ENCODE measurements at regions of chr1 and their contacts with region 1.

Region 1: DNA sequence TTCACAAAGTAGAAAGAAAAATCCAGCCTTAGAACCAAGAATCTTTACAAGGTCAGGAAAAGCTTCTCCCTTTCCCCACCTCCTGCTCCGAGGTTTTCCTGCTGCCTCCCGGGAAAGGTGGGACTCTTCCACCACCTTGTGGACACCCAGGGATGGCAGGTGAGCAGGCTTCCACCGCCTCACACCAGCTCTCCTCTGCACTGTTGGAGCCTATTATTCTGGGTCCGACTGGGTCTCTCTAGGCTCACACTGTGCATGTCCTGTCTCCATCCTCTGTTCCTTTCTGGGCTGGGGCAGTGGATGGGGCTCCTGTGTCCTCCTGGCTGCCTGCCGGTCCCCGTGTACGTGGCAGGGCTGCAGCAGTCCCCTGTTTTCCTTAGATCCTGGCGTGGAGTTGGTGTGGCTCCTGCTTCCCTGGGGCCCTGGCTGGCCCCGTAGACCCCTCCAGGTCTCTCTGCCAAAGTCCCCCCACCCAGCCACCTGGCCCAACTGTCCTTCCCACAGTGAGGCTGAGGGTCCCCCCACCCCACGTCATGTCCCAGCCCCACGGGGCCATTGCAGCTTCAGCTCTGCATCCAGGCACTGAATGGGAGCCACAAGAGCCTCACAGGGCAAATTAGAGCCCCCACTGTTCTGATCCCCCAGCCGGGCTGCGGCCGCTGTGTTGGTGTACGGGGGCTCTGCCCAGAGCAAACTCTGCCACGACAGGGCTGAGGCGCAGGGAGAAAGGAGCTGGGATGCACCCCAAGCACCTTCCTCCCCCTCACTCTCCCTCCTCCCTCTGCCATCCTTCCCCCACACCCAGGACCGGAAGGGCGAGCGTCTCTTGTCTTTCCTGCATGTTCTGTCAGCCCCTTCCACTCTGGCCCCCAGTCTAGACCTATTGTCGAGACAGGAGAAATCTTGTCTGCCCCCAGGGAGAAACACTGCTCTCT is 3.3 kb upstream of the SLC45A1 start:
- DNase-seq: peak; percentile 76
- H3K4me3 ChIP-seq: no peak overlapping the region
- H3K27ac ChIP-seq: no peak overlapping the region
- H3K4me1 ChIP-seq: peaks cover 7% of the 10 kb centered on the region
- H3K27me3 ChIP-seq: no peaks in the 10 kb centered on the region
- CTCF ChIP-seq: peak; percentile 86 to 88
- POLR2A ChIP-seq: no peak

Region 2: GRCh38 chr1:7983086-7983778 is 331.4 kb before region 1 on chr1:
- CTCF ChIA-PET with region 1: interaction called, 147 read pairs
- POLR2A ChIA-PET with region 1: no interaction called
- dilution Hi-C with region 1: no loop called
- intact Hi-C with region 1: loop called (anchors 1 kb)
- DNase-seq: no peak
- H3K4me3 ChIP-seq: no peak overlapping the region
- H3K27ac ChIP-seq: no peak overlapping the region
- H3K4me1 ChIP-seq: no peaks in the 10 kb centered on the region
- H3K27me3 ChIP-seq: no peaks in the 10 kb centered on the region
- CTCF ChIP-seq: no peak
- POLR2A ChIP-seq: no peak

Region 3: GRCh38 chr1:8015036-8015808 is 299.4 kb before region 1 on chr1:
- CTCF ChIA-PET with region 1: interaction called, 396 read pairs
- POLR2A ChIA-PET with region 1: interaction called, 8 read pairs
- dilution Hi-C with region 1: loop called (anchors 10 kb)
- intact Hi-C with region 1: loop called (anchors 1 kb)
- DNase-seq: peak; percentile 93
- H3K4me3 ChIP-seq: no peak overlapping the region
- H3K27ac ChIP-seq: peak overlapping the region; percentile 54
- H3K4me1 ChIP-seq: peaks cover 52% of the 10 kb centered on the region
- H3K27me3 ChIP-seq: no peaks in the 10 kb centered on the region
- CTCF ChIP-seq: peak; percentile 58 to 62
- POLR2A ChIP-seq: no peak

Region 4: DNA sequence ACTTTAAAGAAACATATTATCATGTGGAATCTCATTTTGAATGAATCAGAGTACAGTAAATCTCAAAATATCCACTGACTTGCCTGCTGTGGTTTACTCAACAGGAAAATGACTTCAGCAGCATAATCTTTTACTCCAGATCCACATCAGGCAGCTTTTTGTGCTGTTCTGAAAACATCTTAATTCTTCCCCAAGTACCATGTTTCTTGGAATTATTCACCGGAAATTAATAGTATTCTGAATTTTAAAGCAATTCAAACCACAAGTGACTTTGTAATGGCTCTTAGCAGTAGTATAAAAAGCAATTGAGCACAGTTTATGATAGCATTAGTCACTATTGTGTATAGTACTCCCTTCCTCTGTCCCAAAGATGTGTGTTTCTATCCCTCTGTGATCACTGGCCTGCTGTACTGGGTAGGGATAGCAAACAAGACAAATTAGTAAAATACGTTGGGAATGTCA is 224.3 kb before region 1 on chr1:
- CTCF ChIA-PET with region 1: interaction called, 13 read pairs
- POLR2A ChIA-PET with region 1: no interaction called
- dilution Hi-C with region 1: no loop called
- intact Hi-C with region 1: loop called (anchors 1 kb)
- DNase-seq: peak; percentile 95
- H3K4me3 ChIP-seq: no peak overlapping the region
- H3K27ac ChIP-seq: peak overlapping the region; percentile 90
- H3K4me1 ChIP-seq: peaks cover 42% of the 10 kb centered on the region
- H3K27me3 ChIP-seq: no peaks in the 10 kb centered on the region
- CTCF ChIP-seq: no peak
- POLR2A ChIP-seq: peak; percentile 19

Region 5: DNA sequence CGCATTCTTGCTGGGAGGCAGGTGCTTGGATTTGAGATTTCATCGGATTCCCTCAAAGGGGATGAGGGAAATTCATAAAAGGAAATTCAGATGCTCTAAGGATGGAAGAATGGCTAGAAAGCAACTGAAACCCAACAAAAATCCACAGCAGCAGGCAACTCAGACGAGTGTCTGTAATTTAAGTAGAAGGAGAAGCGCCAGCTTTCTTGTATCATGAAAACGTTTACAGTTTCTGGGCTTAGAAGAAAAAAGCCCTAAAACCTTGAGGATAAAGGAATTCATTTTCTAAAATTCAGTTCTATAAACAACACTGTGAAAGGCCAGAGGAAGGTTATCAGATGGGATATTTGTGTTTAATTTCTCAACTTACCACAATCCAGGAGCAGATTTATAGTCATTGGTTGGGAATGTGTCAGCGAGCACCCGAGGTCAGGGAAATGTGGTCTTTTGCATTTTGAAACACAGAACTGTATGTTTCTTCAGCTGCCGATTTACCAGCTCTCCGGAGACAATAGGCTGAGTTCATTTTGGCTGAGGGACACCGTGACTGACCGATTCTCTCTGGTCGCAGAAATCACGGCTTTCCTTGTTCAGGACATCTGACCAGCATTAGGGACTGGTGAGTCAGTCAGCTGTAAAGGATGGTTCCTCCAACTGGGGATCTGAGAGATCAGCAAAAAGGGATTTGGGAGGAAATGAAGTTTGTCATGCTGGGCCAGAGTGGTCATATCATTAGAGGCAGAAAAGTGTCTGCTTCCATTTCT is 176.9 kb before region 1 on chr1:
- CTCF ChIA-PET with region 1: interaction called, 12 read pairs
- POLR2A ChIA-PET with region 1: no interaction called
- dilution Hi-C with region 1: no loop called
- intact Hi-C with region 1: no loop called
- DNase-seq: peak; percentile 97
- H3K4me3 ChIP-seq: no peak overlapping the region
- H3K27ac ChIP-seq: peak overlapping the region; percentile 81
- H3K4me1 ChIP-seq: peaks cover 39% of the 10 kb centered on the region
- H3K27me3 ChIP-seq: no peaks in the 10 kb centered on the region
- CTCF ChIP-seq: no peak
- POLR2A ChIP-seq: no peak

Region 6: GRCh38 chr1:8259498-8260290 is 54.9 kb before region 1 on chr1:
- CTCF ChIA-PET with region 1: interaction called, 14 read pairs
- POLR2A ChIA-PET with region 1: no interaction called
- dilution Hi-C with region 1: no loop called
- intact Hi-C with region 1: no loop called
- DNase-seq: peak; percentile 87
- H3K4me3 ChIP-seq: peak overlapping the region in 1 of 3 experiments; percentile 12
- H3K27ac ChIP-seq: peak overlapping the region; percentile 27
- H3K4me1 ChIP-seq: peaks cover 18% of the 10 kb centered on the region
- H3K27me3 ChIP-seq: no peaks in the 10 kb centered on the region
- CTCF ChIP-seq: no peak
- POLR2A ChIP-seq: no peak

Region 7: DNA sequence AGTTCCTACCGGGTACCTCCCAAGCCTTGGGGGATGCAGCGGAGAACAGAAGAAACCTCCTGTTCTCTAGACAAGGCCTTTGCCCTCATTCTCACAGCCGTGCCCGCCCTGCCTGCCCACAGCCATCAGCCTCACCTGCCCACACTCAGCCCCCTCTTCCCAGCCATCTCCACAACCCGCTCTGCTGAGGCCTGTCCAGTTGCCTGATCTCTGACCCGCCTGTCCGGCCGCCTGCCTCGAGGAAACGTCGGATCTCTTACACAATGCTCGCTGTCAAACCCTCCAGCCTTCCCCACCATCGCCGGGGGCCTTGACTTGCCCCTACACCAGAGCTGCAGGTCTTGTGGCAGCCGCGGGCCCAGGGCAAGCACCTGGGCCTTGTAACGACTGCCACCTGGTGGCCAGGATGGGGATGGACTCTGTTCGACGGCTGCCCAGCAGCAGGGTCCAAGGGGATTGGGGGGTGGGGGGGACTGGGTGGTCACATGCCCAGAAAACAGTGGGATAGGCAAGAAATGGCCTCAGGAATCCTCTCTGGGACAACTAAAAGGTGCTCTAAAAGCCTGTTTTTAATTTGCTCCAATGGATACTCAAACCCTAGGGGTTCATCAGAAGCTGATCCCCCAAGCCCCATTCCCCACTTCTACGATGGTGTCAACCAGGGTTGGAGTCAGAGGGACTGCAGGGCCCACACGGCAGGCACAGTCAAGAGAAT is 34.3 kb after region 1 on chr1:
- CTCF ChIA-PET with region 1: interaction called, 33 read pairs
- POLR2A ChIA-PET with region 1: interaction called, 3 read pairs
- dilution Hi-C with region 1: no loop called
- intact Hi-C with region 1: loop called (anchors 2 kb)
- DNase-seq: peak; percentile 48
- H3K4me3 ChIP-seq: no peak overlapping the region
- H3K27ac ChIP-seq: no peak overlapping the region
- H3K4me1 ChIP-seq: peaks cover 16% of the 10 kb centered on the region
- H3K27me3 ChIP-seq: no peaks in the 10 kb centered on the region
- CTCF ChIP-seq: peak; percentile 65 to 84
- POLR2A ChIP-seq: no peak

Region 8: DNA sequence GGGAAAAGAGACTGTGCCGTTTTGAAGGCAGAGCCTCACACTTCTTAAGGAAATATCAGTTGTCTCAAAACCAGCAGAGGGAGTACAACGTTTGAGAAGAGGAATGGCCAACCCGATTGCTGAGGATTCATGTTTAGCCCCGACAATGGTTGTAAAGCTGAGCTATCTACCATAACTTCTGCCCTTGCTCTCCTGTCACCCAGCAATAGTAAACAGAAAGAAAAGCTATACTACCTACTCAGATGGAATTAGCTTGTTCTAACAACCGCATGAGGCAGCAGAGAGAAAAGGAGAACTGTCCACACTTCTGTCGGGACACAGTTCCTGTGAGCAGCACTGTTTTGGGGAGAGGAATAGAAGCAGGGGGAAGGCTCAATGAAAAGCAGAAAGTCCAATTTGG is 94.5 kb after region 1 on chr1:
- CTCF ChIA-PET with region 1: no interaction called
- POLR2A ChIA-PET with region 1: no interaction called
- dilution Hi-C with region 1: no loop called
- intact Hi-C with region 1: no loop called
- DNase-seq: peak; percentile 76
- H3K4me3 ChIP-seq: no peak overlapping the region
- H3K27ac ChIP-seq: peak overlapping the region; percentile 62
- H3K4me1 ChIP-seq: peaks cover 53% of the 10 kb centered on the region
- H3K27me3 ChIP-seq: no peaks in the 10 kb centered on the region
- CTCF ChIP-seq: peak; percentile 37 to 42
- POLR2A ChIP-seq: no peak